Heart left ventricle (tissue), 16 donors: ENCODE measurements at regions of chr1 and their contacts with region 1.

Region 1: DNA sequence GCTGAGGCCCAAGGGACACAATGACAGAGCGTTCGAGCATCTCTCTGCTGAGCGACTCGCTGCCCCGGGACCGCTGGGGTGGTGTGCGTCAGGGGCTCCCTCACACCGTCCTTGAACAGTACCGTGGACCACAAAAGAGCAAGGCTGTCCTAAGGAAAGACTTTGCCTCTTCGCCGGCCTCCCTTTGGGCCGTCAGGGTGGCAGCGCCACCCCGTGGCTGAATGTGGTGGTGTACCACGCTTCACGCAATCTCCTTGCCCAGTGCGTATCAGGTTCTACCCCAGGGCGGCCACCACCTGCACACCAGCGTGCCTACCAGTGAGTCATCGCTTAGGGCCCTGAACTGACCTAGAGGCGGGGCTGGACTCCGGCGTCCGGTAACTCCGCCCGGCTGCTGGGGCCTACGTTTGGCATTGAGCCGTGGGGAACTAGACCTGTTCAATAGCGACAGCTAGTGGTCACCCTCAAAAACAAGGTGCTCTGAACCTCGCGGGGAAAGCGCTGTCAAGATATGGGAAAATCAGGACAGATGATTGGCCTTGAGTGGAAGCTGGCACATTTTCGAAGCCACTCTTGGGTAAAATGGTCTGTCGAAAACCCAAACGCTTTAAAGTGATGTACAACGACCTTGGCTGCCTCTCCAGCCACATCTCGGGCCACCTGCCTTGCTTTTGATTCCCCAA is 8.1 kb upstream of the TRAF3IP3 start:
- DNase-seq: peak; percentile 90 to 96 (median 92)
- ATAC-seq: peak; percentile 97 to 99 (median 99)
- H3K4me3 ChIP-seq: peak overlapping the region in 10 of 12 donors; percentile 14 to 51 (median 35)
- H3K27ac ChIP-seq: peak overlapping the region in 11 of 12 donors; percentile 15 to 72 (median 48)
- H3K4me1 ChIP-seq: peaks cover 0 to 53% (median 17%) of the 10 kb centered on the region in 12 donors
- H3K27me3 ChIP-seq: no peaks in the 10 kb centered on the region
- CTCF ChIP-seq: peak; percentile 77 to 96 (median 92)
- POLR2A ChIP-seq: no peak

Region 2: GRCh38 chr1:209565759-209566678 is 181.7 kb before region 1 on chr1:
- intact Hi-C with region 1: loop called in 1 of 10 experiments (anchors 2 kb)
- DNase-seq: peak; percentile 65 to 78 (median 68)
- ATAC-seq: peak; percentile 59 to 90 (median 81)
- H3K4me3 ChIP-seq: no peak overlapping the region
- H3K27ac ChIP-seq: no peak overlapping the region
- H3K4me1 ChIP-seq: peaks cover 0 to 5% (median 0%) of the 10 kb centered on the region in 12 donors
- H3K27me3 ChIP-seq: peaks cover 0 to 9% (median 0%) of the 10 kb centered on the region in 9 donors
- CTCF ChIP-seq: peak; percentile 59 to 84 (median 71)
- POLR2A ChIP-seq: no peak

Region 3: DNA sequence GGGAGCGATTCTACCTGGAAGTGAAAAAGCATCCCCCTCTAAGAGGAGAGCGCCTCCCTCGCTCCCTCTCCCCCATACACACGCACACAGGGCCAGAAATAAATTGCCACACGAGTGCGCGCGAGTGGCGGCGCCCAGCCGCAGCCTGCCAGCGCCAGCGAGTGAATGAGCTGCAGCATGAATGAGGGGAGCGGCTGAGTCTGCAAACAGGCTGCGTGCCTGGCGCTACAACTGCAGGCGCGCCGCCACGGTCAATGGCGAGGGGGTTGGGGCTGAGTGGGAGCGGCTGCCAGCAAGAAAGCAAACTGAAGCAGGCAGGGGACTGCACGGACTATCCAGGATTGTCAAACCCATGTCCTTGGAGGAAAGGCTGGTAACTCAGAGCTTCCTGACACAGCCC is 162.0 kb before region 1 on chr1:
- intact Hi-C with region 1: loop called in 1 of 10 experiments (anchors 5 kb)
- DNase-seq: peak; percentile 51 to 83 (median 68)
- ATAC-seq: peak; percentile 78 to 94 (median 91)
- H3K4me3 ChIP-seq: peak overlapping the region in 3 of 12 donors; percentile 1 to 19 (median 6)
- H3K27ac ChIP-seq: no peak overlapping the region
- H3K4me1 ChIP-seq: peaks cover 0 to 16% (median 8%) of the 10 kb centered on the region in 12 donors
- H3K27me3 ChIP-seq: peaks cover 0 to 45% (median 9%) of the 10 kb centered on the region in 9 donors
- CTCF ChIP-seq: peak in 5 of 12 donors; percentile 8 to 39 (median 20)
- POLR2A ChIP-seq: no peak

Region 4: DNA sequence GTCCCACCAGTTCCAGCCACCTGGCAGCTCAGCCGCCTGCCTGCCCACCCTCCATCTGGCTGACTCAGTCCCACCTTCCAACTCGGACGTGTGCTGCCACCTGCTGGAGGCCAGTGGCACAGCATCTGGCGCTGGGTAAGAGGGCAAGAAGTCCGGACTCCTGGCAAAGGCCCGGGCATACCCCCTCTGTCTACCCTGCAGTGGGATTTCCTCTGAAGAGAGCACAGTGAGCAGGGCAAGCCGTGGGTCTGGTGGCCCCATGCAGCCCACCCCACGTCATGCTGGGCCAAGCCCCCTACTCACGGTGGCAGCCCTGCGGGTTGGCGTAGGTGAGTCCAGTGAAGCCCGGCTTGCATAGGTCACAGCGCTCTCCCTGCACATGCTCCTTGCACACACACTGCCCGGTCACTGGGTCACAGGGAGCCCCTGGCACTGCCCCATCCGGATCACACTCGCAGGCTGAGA is 120.0 kb before region 1 on chr1:
- intact Hi-C with region 1: loop called in 5 of 10 experiments (anchors 5 to 10 kb)
- DNase-seq: peak; percentile 78 to 88 (median 81)
- ATAC-seq: peak; percentile 29 to 77 (median 72)
- H3K4me3 ChIP-seq: peak overlapping the region in 2 of 12 donors; percentile 7 to 38
- H3K27ac ChIP-seq: peak overlapping the region in 4 of 12 donors; percentile 4 to 55 (median 38)
- H3K4me1 ChIP-seq: peaks cover 0 to 55% (median 37%) of the 10 kb centered on the region in 12 donors
- H3K27me3 ChIP-seq: no peaks in the 10 kb centered on the region
- CTCF ChIP-seq: peak; percentile 95 to 99 (median 97)
- POLR2A ChIP-seq: no peak

Region 5: DNA sequence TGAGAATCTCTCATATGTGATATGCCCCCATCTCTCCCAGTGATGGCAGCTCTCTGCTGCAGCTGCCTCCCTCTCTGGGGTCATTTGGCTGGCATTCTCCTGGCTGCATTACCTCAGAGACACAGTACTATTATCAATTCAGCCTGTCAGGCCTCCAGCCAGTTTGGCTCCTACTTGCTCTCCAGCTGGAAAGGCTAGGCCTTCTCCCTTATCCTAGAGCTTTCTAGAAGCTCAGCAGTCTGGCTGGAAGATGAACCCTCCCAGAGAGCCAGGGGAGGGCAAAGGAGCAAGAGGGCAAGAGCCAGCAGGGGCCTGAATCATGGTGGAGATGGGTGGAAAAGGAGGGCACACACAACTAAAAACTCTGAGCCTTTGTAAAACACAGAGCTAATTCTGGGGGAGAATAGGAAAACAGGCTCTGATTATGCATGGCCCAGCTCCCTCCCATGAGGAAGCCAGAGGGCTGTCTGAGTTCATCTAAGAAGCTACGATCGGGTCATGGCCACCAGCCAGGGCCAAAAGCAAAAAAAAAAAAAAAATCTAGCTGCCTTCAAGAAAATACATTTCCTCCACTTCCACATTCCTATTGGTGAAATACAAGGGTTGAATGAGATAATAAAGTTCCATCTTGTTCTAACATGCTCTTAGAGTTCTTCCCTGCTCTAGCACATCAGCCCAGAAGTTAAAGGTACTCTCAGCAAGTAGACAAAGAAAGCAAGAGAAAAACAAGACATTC is 104.3 kb before region 1 on chr1:
- intact Hi-C with region 1: loop called in 2 of 10 experiments (anchors 2 to 10 kb)
- DNase-seq: peak in 4 of 5 donors; percentile 80 to 91 (median 85)
- ATAC-seq: peak; percentile 68 to 87 (median 80)
- H3K4me3 ChIP-seq: no peak overlapping the region
- H3K27ac ChIP-seq: peak overlapping the region; percentile 38 to 94 (median 90)
- H3K4me1 ChIP-seq: peaks cover 16 to 84% (median 73%) of the 10 kb centered on the region in 12 donors
- H3K27me3 ChIP-seq: no peaks in the 10 kb centered on the region
- CTCF ChIP-seq: peak in 2 of 12 donors; percentile 6 to 27
- POLR2A ChIP-seq: no peak

Region 6: GRCh38 chr1:209704584-209704983 is 43.1 kb before region 1 on chr1 and contains the start of gene HSD11B1:
- intact Hi-C with region 1: loop called in 2 of 10 experiments (anchors 5 kb)
- DNase-seq: peak; percentile 63 to 81 (median 73)
- ATAC-seq: peak; percentile 82 to 96 (median 95)
- H3K4me3 ChIP-seq: peak within 1 kb of the TSS in 1 of 12 donors; percentile 14
- H3K27ac ChIP-seq: peak within 1 kb of the TSS in 5 of 12 donors; percentile 32 to 54 (median 47)
- H3K4me1 ChIP-seq: peaks cover 0 to 17% (median 10%) of the 10 kb centered on the region in 12 donors
- H3K27me3 ChIP-seq: no peaks in the 10 kb centered on the region
- CTCF ChIP-seq: no peak
- POLR2A ChIP-seq: no peak
- total RNA-seq, gene HSD11B1: 1.7 to 36.1 (median 3.6) TPM